ENCODE measurements at regions of chr5 and their contacts with region 1.

Region 1: DNA sequence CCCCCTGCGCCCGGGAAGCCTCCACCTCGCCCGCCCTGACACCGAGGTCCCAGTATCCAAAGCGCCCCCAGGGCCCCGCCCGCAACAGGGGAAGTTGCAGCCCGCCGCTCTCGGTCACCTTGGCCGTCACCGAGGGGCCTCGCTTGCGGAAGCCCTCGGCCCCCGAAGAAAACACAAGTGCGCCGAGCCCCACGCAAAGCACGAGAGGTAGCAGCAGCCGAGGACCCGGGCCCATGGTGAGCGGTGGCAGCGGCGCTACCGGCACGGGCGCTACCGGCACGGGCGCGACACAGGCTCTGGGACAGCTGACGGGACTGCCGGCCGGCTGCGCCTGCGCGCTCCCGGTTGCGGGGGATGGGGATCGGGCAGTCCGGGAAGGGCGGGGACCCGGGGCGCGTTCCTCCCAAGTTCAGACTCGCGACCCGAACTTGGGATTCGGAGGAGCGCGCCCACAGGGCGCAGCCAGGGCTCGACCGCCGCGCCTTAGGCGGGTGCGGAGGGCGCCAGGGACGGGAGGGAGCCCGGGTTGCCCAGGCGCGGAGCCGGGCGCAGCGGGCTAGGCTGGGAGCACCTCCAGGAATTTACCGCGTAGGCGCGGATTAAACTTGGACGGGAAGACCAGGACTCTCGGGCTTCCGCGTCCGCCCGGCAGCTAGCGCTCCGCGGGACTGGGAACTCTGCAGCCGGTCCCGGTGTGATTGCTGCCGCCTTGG is at the start of gene PPIC:
- DNase-seq: peak; percentile 88 to 90
- ATAC-seq: peak; percentile 95 to 99 (median 96)
- H3K4me3 ChIP-seq: peak within 1 kb of the TSS; percentile 40 to 89 (median 82)
- H3K27ac ChIP-seq: peak within 1 kb of the TSS; percentile 93 to 98 (median 95)
- H3K4me1 ChIP-seq: peaks cover 0 to 54% (median 36%) of the 10 kb centered on the region in 9 donors
- H3K27me3 ChIP-seq: peaks cover 0 to 61% (median 0%) of the 10 kb centered on the region in 7 donors
- CTCF ChIP-seq: no peak
- total RNA-seq, gene PPIC: 34.2 to 54.3 (median 43.2) TPM

Region 2: GRCh38 chr5:122774861-122775549 is 261.5 kb before region 1 on chr5 and contains the start of gene SNX2:
- intact Hi-C with region 1: loop called in 1 of 10 experiments (anchors 10 kb)
- DNase-seq: peak; percentile 91 to 97
- ATAC-seq: peak; percentile 98 to 100 (median 100)
- H3K4me3 ChIP-seq: peak within 1 kb of the TSS; percentile 63 to 96 (median 80)
- H3K27ac ChIP-seq: peak within 1 kb of the TSS in 9 of 10 donors; percentile 57 to 93 (median 86)
- H3K4me1 ChIP-seq: peaks cover 0 to 57% (median 19%) of the 10 kb centered on the region in 9 donors
- H3K27me3 ChIP-seq: no peaks in the 10 kb centered on the region
- CTCF ChIP-seq: peak in 5 of 9 donors; percentile 8 to 36 (median 22)
- total RNA-seq, gene SNX2: 30.6 to 48.5 (median 36.1) TPM

Region 3: GRCh38 chr5:122845229-122846050 is 191.1 kb before region 1 on chr5 and contains the start of gene SNX24:
- intact Hi-C with region 1: loop called in 2 of 10 experiments (anchors 5 to 10 kb)
- DNase-seq: peak; percentile 75 to 84
- ATAC-seq: peak; percentile 89 to 95 (median 92)
- H3K4me3 ChIP-seq: peak within 1 kb of the TSS; percentile 90 to 98 (median 96)
- H3K27ac ChIP-seq: peak within 1 kb of the TSS; percentile 49 to 93 (median 90)
- H3K4me1 ChIP-seq: peaks cover 0 to 43% (median 13%) of the 10 kb centered on the region in 9 donors
- H3K27me3 ChIP-seq: no peaks in the 10 kb centered on the region
- CTCF ChIP-seq: no peak
- total RNA-seq, gene SNX24: 11.7 to 16.3 (median 13.8) TPM

Region 4: GRCh38 chr5:122907238-122907637 is 129.3 kb before region 1 on chr5:
- intact Hi-C with region 1: loop called in 1 of 10 experiments (anchors 5 kb)
- DNase-seq: no peak
- ATAC-seq: no peak
- H3K4me3 ChIP-seq: no peak overlapping the region
- H3K27ac ChIP-seq: no peak overlapping the region
- H3K4me1 ChIP-seq: peaks cover 0 to 21% (median 7%) of the 10 kb centered on the region in 9 donors
- H3K27me3 ChIP-seq: no peaks in the 10 kb centered on the region
- CTCF ChIP-seq: no peak

Region 5: GRCh38 chr5:122951658-122952057 is 84.9 kb before region 1 on chr5:
- intact Hi-C with region 1: no loop called
- DNase-seq: no peak
- ATAC-seq: no peak
- H3K4me3 ChIP-seq: no peak overlapping the region
- H3K27ac ChIP-seq: no peak overlapping the region
- H3K4me1 ChIP-seq: no peaks in the 10 kb centered on the region
- H3K27me3 ChIP-seq: no peaks in the 10 kb centered on the region
- CTCF ChIP-seq: no peak

Measured in heart right ventricle (tissue), 16 donors.